A673 (cell line): ENCODE measurements at regions of chr7 and their contacts with region 1.

Region 1: DNA sequence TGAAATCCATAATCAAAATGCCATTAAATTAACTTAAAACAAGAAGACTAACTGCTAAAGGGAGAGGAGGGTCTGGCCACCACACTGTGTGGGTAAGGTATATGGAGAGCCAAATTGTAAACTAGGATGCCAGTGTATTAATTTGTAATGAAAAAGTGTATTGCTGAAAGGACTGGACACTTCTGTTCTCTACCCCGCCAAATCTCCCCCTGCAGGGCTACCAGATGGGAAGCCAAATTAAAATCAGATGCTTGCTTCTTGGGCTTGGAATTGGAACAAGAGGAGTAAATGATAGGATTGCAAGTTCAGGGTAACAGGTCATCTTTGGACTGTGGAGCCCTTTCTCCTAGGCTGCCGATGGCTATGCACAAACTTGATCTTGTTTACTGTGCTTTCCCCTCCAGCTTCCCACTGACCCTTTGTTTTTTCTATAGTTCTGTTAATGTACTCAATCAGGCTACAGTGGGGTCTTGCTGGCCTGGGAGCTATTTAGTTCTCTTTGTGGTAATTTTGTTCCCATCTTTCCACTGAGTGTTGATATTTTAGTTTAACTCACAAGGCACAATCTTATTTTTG is 932.1 kb upstream of the C7orf33 start:
- DNase-seq: no peak
- H3K4me3 ChIP-seq: no peak overlapping the region
- H3K27ac ChIP-seq: no peak overlapping the region
- H3K4me1 ChIP-seq: no peaks in the 10 kb centered on the region
- H3K27me3 ChIP-seq: no peaks in the 10 kb centered on the region
- CTCF ChIP-seq: no peak

Region 2: DNA sequence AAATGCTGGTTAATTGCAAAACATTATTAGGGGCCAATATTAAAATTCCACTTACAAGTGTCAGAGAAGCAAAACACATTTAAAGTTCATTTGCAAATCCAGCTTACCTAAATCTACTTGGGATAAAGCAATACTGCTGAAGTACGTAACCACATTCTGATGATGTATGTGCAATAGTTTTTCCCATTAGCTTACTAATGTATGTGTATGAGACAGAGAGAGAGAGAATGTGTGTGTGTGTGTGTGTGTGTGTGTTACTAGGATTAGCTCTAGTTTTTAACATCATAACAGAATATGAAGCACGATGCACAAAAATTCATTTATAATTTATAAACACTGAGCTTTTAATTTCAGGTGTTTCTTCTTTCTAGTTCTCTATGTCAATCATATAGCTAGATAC is 142.1 kb before region 1 on chr7:
- CTCF ChIA-PET with region 1: interaction called, 10 read pairs
- POLR2A ChIA-PET with region 1: no interaction called
- intact Hi-C with region 1: no loop called
- DNase-seq: no peak
- H3K4me3 ChIP-seq: no peak overlapping the region
- H3K27ac ChIP-seq: no peak overlapping the region
- H3K4me1 ChIP-seq: no peaks in the 10 kb centered on the region
- H3K27me3 ChIP-seq: no peaks in the 10 kb centered on the region
- CTCF ChIP-seq: no peak